Psoas muscle (tissue), 8 donors: ENCODE measurements at regions of chr1 and their contacts with region 1.

Region 1: GRCh38 chr1:228102791-228103620 is at the start of gene C1orf35:
- DNase-seq: peak; percentile 95 to 97
- ATAC-seq: peak; percentile 85 to 91 (median 86)
- H3K4me3 ChIP-seq: peak within 1 kb of the TSS; percentile 82
- H3K27ac ChIP-seq: peak within 1 kb of the TSS; percentile 85
- H3K4me1 ChIP-seq: peaks cover 23% of the 10 kb centered on the region
- H3K27me3 ChIP-seq: no peaks in the 10 kb centered on the region
- CTCF ChIP-seq: no peak
- total RNA-seq, gene C1orf35: 3.6 to 6.5 (median 5.1) TPM

Region 2: DNA sequence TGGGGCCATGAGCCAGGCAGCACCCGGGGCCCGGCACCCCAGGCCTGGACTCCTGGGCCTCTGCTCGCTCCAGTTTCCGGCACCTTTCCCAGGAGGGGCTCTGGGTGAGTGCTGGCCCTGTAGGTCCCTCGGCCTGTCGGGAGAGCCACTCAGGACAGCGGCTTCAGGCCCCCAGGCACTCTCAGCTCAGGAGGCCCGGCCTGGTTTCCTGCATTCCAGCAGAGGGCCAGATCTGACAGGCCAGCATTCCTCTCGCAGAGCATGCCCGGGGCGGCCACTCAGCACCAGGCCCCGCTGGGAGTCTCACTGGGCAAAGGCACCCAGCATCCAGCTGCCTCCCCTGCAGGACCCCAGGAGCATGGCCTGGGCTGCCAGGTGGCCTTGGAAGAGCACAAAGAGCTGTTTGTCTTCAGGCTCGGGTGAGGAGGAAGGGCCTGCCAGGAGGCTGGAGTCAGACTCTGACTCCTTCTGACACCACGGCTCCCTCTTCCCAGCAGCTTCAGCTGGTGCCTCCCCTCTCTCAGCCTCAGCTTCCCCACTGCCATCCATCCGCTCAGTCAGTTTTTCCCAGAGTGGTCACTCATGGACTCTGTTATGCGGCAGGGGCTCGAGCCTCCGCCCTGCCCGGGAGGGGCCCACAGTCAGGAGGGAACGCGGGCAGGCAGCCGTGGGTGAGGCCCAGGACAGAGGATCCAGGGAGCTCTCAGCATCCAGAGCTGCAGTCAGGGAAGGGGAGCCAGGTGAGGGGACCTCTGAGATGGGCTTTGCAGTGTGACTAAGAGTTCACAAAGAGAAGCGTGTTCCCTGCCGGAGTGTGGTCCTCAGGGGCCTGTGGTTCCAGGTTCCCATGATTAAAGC is 206.9 kb before region 1 on chr1:
- intact Hi-C with region 1: no loop called
- DNase-seq: peak; percentile 11 to 39
- ATAC-seq: no peak
- H3K4me3 ChIP-seq: no peak overlapping the region
- H3K27ac ChIP-seq: no peak overlapping the region
- H3K4me1 ChIP-seq: no peaks in the 10 kb centered on the region
- H3K27me3 ChIP-seq: no peaks in the 10 kb centered on the region
- CTCF ChIP-seq: no peak

Region 3: GRCh38 chr1:228082135-228082891 is 20.7 kb before region 1 on chr1 and contains the start of gene ARF1:
- intact Hi-C with region 1: loop called in 1 of 2 experiments (anchors 2 kb)
- DNase-seq: peak; percentile 91 to 96
- ATAC-seq: peak; percentile 90 to 95 (median 94)
- H3K4me3 ChIP-seq: peak within 1 kb of the TSS; percentile 99
- H3K27ac ChIP-seq: peak within 1 kb of the TSS; percentile 100
- H3K4me1 ChIP-seq: peaks cover 42% of the 10 kb centered on the region
- H3K27me3 ChIP-seq: no peaks in the 10 kb centered on the region
- CTCF ChIP-seq: no peak
- total RNA-seq, gene ARF1: 176 to 328 (median 256) TPM

Region 4: GRCh38 chr1:228275739-228276421 is 172.9 kb after region 1 on chr1:
- intact Hi-C with region 1: no loop called
- DNase-seq: peak; percentile 86 to 91
- ATAC-seq: peak; percentile 33 to 55 (median 37)
- H3K4me3 ChIP-seq: peak overlapping the region; percentile 60
- H3K27ac ChIP-seq: peak overlapping the region; percentile 56
- H3K4me1 ChIP-seq: peaks cover 38% of the 10 kb centered on the region
- H3K27me3 ChIP-seq: no peaks in the 10 kb centered on the region
- CTCF ChIP-seq: no peak

Region 5: DNA sequence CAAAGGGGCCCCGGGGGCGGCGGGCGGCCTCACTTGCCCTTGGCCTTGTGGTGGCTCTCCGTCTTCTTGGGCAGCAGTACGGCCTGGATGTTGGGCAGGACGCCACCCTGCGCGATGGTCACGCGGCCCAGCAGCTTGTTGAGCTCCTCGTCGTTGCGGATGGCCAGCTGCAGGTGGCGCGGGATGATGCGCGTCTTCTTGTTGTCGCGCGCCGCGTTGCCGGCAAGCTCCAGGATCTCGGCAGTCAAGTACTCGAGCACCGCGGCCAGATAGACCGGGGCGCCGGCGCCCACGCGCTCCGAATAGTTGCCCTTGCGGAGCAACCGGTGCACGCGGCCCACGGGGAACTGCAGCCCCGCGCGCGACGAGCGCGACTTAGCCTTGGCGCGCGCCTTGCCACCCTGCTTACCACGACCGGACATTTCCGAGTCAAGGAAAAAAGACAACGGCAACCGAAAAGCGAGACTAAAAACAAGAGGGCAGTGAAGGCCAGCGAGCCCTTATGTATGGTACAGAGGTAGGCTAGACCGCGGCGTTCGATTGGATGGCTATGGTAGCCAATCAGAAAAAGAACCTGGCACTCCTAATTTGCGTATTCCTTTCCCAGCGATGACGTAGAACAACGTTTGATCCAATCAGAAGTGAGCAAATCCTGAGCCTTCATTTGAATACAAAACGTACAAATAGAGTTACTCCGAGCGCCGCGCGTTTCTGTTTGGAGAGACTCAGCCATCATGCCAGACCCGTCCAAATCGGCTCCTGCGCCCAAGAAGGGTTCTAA is 354.6 kb after region 1 on chr1:
- intact Hi-C with region 1: no loop called
- DNase-seq: peak; percentile 83 to 89
- ATAC-seq: peak; percentile 85 to 86 (median 86)
- H3K4me3 ChIP-seq: peak overlapping the region; percentile 65
- H3K27ac ChIP-seq: peak overlapping the region; percentile 61
- H3K4me1 ChIP-seq: peaks cover 8% of the 10 kb centered on the region
- H3K27me3 ChIP-seq: peaks cover 3 to 77% (median 21%) of the 10 kb centered on the region in 3 donors
- CTCF ChIP-seq: peak; percentile 20